Right ventricle myocardium inferior (tissue), 1 donor: ENCODE measurements at regions of chr16 and their contacts with region 1.

Region 1: DNA sequence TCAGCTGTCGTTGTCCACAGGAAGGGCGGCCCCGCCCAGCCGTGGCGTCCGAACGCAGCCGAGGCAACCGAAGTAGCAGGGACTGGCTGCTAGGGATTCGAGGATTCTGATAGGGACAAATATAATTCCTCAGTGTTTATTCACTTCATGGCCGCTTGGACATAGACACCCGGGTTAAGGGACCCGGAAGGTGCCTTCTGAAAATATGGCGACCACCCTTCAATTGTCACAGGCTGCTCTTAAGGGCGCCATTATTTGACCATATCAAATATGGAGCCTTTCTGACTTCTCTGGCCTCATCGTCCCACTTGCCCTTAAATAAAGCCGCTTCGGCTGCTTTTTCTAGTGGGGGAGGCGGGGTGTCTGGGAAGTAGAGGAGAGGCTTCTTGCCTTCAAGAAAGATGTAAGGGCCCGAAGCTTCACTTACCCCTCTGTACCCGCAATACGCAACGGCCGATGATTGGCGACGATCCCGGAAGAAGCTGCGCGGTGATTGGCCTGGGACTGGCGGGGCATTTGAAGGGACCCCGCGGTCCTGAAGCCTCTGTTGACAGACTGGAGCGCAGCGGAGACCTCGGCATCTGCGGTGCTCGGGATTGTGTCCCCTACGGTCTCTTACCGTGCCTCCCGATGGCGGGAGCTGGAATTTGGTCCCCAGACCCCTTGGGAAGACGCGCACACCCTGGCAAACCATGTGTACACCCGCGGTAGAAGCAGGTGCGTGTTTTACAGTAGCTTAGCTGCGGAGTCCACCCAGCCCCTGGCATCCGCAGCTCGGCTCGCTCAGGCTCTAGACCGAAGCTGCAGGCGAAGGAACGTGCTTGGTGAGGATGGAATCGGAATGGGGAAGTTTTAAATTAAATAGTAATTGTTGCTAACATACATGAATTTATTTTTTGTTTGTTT is at the start of gene ZNF688:
- DNase-seq: peak; percentile 95
- ATAC-seq: peak; percentile 92
- total RNA-seq, gene ZNF688: 12.2 TPM

Region 2: DNA sequence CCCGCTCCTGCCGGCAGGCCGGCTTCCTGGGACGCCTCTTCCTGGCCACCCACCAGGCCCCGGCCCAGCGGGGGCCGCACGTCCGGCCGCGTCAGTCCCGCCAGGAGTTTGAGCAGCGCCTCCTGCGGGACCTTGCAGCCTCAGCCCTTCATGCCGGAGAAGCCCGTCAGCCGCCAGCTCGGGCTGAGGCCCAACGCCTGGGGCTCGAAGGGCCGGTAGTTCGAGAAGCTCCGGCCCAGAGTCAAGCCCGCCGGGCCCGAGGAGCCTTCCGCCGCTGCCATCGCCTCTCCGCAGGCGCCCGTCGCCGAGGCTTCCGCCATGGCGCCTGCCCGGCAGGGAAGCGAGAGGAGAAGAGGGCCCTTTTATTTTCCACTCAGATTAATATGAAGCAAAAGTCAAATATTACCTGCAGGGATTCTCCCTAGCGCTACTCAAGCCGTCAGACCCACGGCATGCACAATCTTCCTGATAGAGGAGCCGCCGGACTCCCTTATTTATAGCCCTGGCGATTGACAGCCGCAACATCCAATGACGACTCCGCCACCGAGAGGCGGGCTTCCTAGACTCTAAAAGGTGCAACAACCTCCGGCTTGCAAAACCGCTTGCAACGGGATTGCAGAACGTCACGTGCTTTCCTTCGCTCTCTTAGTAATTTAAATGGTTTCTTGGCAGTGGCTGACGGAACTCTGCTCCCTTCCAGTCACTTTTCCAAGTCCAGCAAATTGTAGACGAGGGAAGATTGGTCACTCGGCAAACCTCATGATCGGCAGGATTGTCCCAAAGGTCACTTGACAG is 126.3 kb before region 1 on chr16 and contains the start of gene SEPHS2:
- intact Hi-C with region 1: loop called (anchors 5 kb)
- DNase-seq: peak; percentile 99
- ATAC-seq: peak; percentile 98
- total RNA-seq, gene SEPHS2: 29.3 TPM

Region 3: GRCh38 chr16:30534368-30535105 is 37.4 kb before region 1 on chr16 and contains the start of gene ZNF747:
- intact Hi-C with region 1: loop called (anchors 1 kb)
- DNase-seq: peak; percentile 95
- ATAC-seq: peak; percentile 90
- total RNA-seq, gene ZNF747: 5.7 TPM

Region 4: DNA sequence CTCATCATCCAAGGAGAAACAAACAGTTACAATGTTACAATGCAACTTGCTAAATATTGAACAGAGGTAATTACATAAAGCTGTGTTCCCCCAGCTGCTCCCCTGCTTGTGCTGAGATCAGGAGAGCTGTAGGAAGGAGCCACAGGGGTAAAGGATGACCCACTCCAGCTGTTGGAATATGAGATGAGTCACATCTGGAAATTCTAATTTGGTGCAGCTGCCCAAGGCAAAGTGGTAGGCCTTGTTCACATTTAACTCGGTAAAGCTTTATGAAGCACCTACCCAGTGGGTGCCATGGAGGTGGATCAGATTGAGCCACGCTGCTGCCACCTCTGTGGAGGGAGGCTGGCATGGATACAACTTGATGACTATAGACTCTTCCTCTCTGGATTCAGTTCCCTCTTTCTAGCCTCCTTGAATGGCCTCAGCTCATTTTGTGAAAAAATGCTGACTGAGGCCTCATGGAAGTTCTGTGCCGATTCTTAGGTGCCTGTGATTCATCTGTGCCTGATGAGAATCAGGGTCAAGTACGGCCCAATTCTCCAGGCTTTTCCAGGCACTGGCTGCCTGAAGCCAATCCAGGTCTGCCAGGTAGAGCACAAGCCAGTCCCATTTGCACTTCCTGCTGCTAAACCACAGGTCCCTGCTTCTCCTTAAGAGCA is 30.8 kb after region 1 on chr16:
- intact Hi-C with region 1: no loop called
- DNase-seq: no peak
- ATAC-seq: no peak

Region 5: DNA sequence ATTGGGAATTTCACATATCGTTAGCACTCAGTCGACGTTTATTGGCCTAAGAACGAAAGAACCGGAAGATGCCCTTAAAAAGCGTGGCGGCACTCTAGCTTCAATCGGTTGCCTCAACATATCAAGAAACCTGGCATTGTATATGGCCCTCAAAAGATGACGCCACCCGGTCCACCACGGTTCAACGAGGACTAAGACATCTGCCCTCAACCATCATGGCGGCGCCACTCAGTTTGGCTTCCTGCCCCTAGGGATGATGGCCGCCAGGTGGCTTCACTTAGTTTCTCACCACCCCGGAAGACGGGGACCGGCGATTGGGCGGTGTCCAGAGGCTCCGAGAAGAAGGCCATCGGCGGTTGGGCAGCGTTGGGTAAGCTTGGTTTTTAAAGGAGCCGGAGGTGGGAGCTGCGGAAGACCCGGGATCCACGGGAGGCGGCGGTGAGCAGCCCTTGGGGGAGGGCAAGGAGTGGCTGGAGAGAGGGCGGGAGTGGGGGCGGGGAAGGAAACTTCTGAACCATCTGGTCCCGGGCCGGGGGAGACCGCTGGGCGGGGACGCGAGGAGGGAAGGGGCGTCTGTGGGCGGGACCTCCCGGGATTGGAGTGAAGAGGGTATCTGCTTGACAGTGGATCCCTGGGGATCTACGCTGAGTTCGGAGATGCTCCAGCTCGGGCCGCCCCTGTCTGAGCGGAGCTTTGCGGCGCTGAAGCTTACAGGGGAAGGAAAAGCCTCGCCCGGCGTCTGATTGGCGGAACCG is 78.6 kb after region 1 on chr16 and contains the start of gene PRR14:
- intact Hi-C with region 1: loop called (anchors 5 kb)
- DNase-seq: peak; percentile 100
- ATAC-seq: peak; percentile 94
- total RNA-seq, gene PRR14: 18.2 TPM

Region 6: DNA sequence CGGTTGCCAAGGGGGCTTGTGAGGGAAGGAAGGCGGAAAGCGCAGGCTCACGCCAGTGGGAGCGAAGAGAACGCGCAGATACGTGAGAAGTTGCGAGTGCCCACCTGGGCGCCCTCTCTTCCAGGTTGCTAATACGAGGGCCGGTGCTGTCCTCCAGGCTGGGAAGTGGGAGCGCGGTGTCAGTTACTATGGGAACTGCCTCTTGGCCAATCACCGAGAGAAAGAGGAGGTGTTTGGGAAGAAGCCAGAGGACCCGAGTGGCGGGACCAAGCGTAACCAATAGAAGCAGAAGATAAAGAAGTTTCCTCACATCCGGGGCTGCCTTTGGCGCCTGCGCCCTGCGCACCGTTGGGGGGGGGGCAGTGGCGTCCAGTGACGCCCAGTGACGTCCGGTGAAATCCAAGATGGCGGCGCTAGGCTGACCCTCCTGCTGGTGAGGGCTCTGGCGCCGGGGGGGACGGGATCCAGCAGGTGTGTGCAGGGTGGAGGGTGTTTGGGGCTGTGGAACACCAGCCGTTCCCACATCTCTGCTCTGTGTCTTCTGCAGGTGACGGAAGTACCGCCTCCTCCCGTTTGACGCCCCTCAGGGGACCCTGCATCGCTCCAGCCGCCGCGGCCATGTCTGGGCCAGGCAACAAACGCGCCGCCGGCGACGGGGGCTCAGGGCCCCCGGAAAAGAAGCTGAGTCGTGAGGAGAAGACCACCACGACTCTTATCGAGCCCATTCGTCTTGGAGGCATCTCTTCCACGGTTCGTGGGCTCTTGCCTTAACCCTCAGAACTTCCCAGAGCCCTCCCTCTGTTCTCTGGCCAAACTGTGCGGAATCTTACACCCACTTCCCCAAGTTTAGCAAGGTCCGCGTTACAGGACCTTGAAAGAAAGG is 190.2 kb after region 1 on chr16 and contains the starts of genes CFAP119 and RNF40:
- intact Hi-C with region 1: no loop called
- DNase-seq: peak; percentile 96
- ATAC-seq: peak; percentile 96
- total RNA-seq, gene CFAP119: 0.89 TPM
- total RNA-seq, gene RNF40: 42.6 TPM